A549 (cell line): ENCODE measurements at regions of chr14 and their contacts with region 1.

Region 1: GRCh38 chr14:77654001-77654441 is 37.6 kb upstream of the SPTLC2 start:
- DNase-seq: no peak
- ATAC-seq: peak in 1 of 2 experiments; percentile 24; a peak in 3 of 6 replicates
- H3K4me3 ChIP-seq: no peak overlapping the region
- H3K27ac ChIP-seq: no peak overlapping the region
- H3K4me1 ChIP-seq: no peaks in the 10 kb centered on the region
- CTCF ChIP-seq: no peak
- EP300 ChIP-seq: no peak
- POLR2A ChIP-seq: no peak
- RAD21 ChIP-seq: no peak

Region 2: GRCh38 chr14:77613201-77613600 is 40.8 kb before region 1 on chr14:
- CTCF ChIA-PET with region 1: no interaction called
- POLR2A ChIA-PET with region 1: no interaction called
- DNase-seq: no peak
- ATAC-seq: no peak
- H3K4me3 ChIP-seq: no peak overlapping the region
- H3K27ac ChIP-seq: no peak overlapping the region
- H3K4me1 ChIP-seq: peaks cover 33% of the 10 kb centered on the region
- CTCF ChIP-seq: no peak
- EP300 ChIP-seq: no peak
- POLR2A ChIP-seq: no peak
- RAD21 ChIP-seq: no peak

Region 3: GRCh38 chr14:77640751-77641533 is 13.1 kb before region 1 on chr14:
- CTCF ChIA-PET with region 1: interaction called, 15 read pairs
- POLR2A ChIA-PET with region 1: no interaction called
- DNase-seq: no peak
- ATAC-seq: no peak
- H3K4me3 ChIP-seq: no peak overlapping the region
- H3K27ac ChIP-seq: no peak overlapping the region
- H3K4me1 ChIP-seq: peaks cover 4% of the 10 kb centered on the region; the same call in 1 of the 3 replicates
- CTCF ChIP-seq: no peak
- EP300 ChIP-seq: no peak
- POLR2A ChIP-seq: no peak
- RAD21 ChIP-seq: no peak